Activated CD8-positive, alpha-beta memory T cell treated with anti-CD3 and anti-CD28 coated beads, Interleukin-2, amount 10 ng/mL, durations not matched to agents 7 days and 5 days (primary cell): ENCODE measurements at regions of chr3 and their contacts with region 1.

Region 1: GRCh38 chr3:160003520-160004128 is 15.0 kb downstream of the IL12A start:
- DNase-seq: peak; percentile 66
- ATAC-seq: peak; percentile 84
- H3K4me3 Mint-ChIP-seq: no peak overlapping the region
- H3K27ac Mint-ChIP-seq: no peak overlapping the region
- H3K4me1 Mint-ChIP-seq: peaks cover 24% of the 10 kb centered on the region
- H3K27me3 Mint-ChIP-seq: peaks cover 5% of the 10 kb centered on the region

Region 2: GRCh38 chr3:159988617-159989271 is 14.9 kb before region 1 on chr3 and contains the start of gene IL12A:
- CTCF ChIA-PET with region 1: interaction called, 128 read pairs
- DNase-seq: peak; percentile 89
- ATAC-seq: peak; percentile 96
- H3K4me3 Mint-ChIP-seq: peak within 1 kb of the TSS; percentile 76
- H3K27ac Mint-ChIP-seq: peak within 1 kb of the TSS; percentile 66
- H3K4me1 Mint-ChIP-seq: peaks cover 19% of the 10 kb centered on the region
- H3K27me3 Mint-ChIP-seq: peaks cover 8% of the 10 kb centered on the region
- total RNA-seq, gene IL12A: 0.63 to 1.4 TPM

Region 3: GRCh38 chr3:160027541-160028195 is 24.0 kb after region 1 on chr3:
- CTCF ChIA-PET with region 1: interaction called, 15 read pairs
- DNase-seq: peak; percentile 55
- ATAC-seq: peak; percentile 86
- H3K4me3 Mint-ChIP-seq: peak overlapping the region; percentile 40
- H3K27ac Mint-ChIP-seq: peak overlapping the region; percentile 95
- H3K4me1 Mint-ChIP-seq: peaks cover 43% of the 10 kb centered on the region
- H3K27me3 Mint-ChIP-seq: no peaks in the 10 kb centered on the region